Activated naive CD4-positive, alpha-beta T cell treated with anti-CD3 and anti-CD28 coated beads for 36 hours (primary cell): ENCODE measurements at regions of chr19 and their contacts with region 1.

Region 1: GRCh38 chr19:38335949-38336637 is 463 bp downstream of the CATSPERG start:
- DNase-seq: peak; percentile 98
- H3K4me3 Mint-ChIP-seq: peak overlapping the region; percentile 96
- H3K27ac Mint-ChIP-seq: peak overlapping the region; percentile 96
- H3K4me1 Mint-ChIP-seq: peaks cover 14% of the 10 kb centered on the region
- H3K27me3 Mint-ChIP-seq: no peaks in the 10 kb centered on the region

Region 2: GRCh38 chr19:37906869-37907734 is 429.0 kb before region 1 on chr19 and contains the start of gene SIPA1L3:
- CTCF ChIA-PET with region 1: interaction called, 20 read pairs
- intact Hi-C with region 1: loop called (anchors 1 kb)
- DNase-seq: peak; percentile 95
- H3K4me3 Mint-ChIP-seq: peak within 1 kb of the TSS; percentile 77
- H3K27ac Mint-ChIP-seq: peak within 1 kb of the TSS; percentile 59
- H3K4me1 Mint-ChIP-seq: peaks cover 20% of the 10 kb centered on the region
- H3K27me3 Mint-ChIP-seq: no peaks in the 10 kb centered on the region
- total RNA-seq, gene SIPA1L3: 8.1 to 10.4 TPM

Region 3: DNA sequence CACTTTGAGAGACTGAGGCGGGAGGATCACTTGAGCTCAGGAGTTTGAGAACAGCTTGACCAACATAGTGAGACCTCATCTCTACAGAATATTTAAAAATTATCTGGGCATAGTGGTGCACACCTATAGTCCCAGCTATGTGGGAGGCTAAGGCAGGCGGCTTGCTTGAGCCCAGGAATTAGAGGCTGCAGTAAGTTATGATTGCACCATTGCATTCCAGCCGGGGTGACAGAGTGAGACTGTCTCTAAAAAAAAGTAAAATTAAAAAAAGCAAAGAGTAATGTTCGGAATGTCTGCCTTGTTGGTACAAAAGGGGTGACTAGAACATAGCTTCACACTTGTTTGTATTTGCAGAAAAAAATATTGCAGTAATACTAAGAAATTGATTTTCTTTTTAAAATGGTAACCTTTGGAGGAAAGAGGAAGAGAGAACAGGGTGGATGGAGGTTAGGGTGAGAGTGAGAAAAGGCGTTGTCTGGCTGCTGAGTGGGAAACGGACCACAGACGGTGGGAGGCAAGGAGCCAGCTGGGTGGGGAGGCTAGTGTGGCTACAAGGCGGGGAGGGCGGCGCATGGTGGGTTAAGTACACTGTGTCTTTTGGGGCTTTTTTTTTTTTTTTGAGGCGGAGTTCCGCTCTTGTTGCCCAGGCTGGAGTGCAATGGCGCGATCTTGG is 90.1 kb before region 1 on chr19:
- CTCF ChIA-PET with region 1: interaction called, 31 read pairs
- intact Hi-C with region 1: loop called (anchors 1 kb)
- DNase-seq: no peak
- H3K4me3 Mint-ChIP-seq: no peak overlapping the region
- H3K27ac Mint-ChIP-seq: no peak overlapping the region
- H3K4me1 Mint-ChIP-seq: peaks cover 2% of the 10 kb centered on the region
- H3K27me3 Mint-ChIP-seq: no peaks in the 10 kb centered on the region

Region 4: GRCh38 chr19:38361633-38362075 is 25.6 kb after region 1 on chr19:
- CTCF ChIA-PET with region 1: interaction called, 3 read pairs
- intact Hi-C with region 1: loop called (anchors 2 kb)
- DNase-seq: peak; percentile 66
- H3K4me3 Mint-ChIP-seq: peak overlapping the region; percentile 78
- H3K27ac Mint-ChIP-seq: no peak overlapping the region
- H3K4me1 Mint-ChIP-seq: peaks cover 10% of the 10 kb centered on the region
- H3K27me3 Mint-ChIP-seq: peaks cover 31% of the 10 kb centered on the region

Region 5: GRCh38 chr19:38392707-38393308 is 56.7 kb after region 1 on chr19:
- CTCF ChIA-PET with region 1: no interaction called
- intact Hi-C with region 1: no loop called
- DNase-seq: no peak
- H3K4me3 Mint-ChIP-seq: no peak overlapping the region
- H3K27ac Mint-ChIP-seq: no peak overlapping the region
- H3K4me1 Mint-ChIP-seq: peaks cover 20% of the 10 kb centered on the region
- H3K27me3 Mint-ChIP-seq: peaks cover 14% of the 10 kb centered on the region

Region 6: GRCh38 chr19:38402967-38403861 is 67.1 kb after region 1 on chr19 and contains the start of gene FAM98C:
- CTCF ChIA-PET with region 1: no interaction called
- intact Hi-C with region 1: loop called (anchors 1 kb)
- DNase-seq: peak; percentile 98
- H3K4me3 Mint-ChIP-seq: peak within 1 kb of the TSS; percentile 90
- H3K27ac Mint-ChIP-seq: peak within 1 kb of the TSS; percentile 84
- H3K4me1 Mint-ChIP-seq: peaks cover 15% of the 10 kb centered on the region
- H3K27me3 Mint-ChIP-seq: no peaks in the 10 kb centered on the region
- total RNA-seq, gene FAM98C: 21.5 to 27.0 TPM